ENCODE measurements at regions of chr7 and their contacts with region 1.

Region 1: DNA sequence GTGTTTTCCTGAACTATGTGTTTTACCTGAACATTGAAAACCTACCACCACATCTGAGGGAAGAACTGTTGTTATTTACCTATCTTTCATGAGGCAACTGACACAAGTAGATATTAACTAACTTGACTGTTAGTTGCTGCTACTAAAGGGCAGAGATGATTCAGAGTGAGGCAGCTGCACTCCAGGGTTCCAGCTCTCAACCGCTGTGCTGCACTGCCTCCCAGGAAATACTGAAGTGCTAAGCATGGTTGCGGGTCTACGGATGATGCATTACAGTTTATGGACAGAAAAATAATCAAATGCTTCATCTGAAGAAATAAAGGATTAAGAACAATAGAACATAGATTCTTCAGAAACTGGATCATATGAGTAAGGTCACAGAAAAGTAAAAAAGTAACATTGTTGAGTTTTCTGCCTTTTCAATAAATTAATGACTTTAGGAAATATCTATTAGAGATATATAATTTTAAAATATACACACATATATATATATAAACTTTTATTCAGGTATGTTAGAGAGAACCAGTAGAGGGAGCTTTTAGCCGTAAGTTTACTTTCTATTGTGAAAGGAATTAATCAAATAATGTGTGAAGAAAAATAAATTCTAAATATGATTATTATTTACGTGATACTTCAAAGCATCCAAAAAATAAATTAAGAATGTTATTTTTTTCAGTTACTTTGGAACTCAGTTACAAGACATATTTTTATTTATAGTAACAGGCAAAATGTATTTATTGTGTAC is 620.0 kb downstream of the CNTNAP2 start:
- DNase-seq: peak; percentile 39
- ATAC-seq: peak; percentile 89
- H3K4me3 ChIP-seq: no peak overlapping the region
- H3K27ac ChIP-seq: peak overlapping the region; percentile 66
- H3K4me1 ChIP-seq: no peaks in the 10 kb centered on the region; the same call in 1 of the 2 replicates
- H3K27me3 ChIP-seq: no peaks in the 10 kb centered on the region
- CTCF ChIP-seq: 0 out of 2 replicates have a peak, but pooled peaks have one; percentile 21

Region 2: GRCh38 chr7:146115851-146116520 is 620.6 kb before region 1 on chr7:
- CTCF ChIA-PET with region 1: no interaction called
- POLR2A ChIA-PET with region 1: no interaction called
- intact Hi-C with region 1: loop called (anchors 2 kb)
- DNase-seq: peak; percentile 46
- ATAC-seq: peak; percentile 70
- H3K4me3 ChIP-seq: peak overlapping the region; percentile 66
- H3K27ac ChIP-seq: no peak overlapping the region
- H3K4me1 ChIP-seq: no peaks in the 10 kb centered on the region
- H3K27me3 ChIP-seq: peaks cover 19% of the 10 kb centered on the region
- CTCF ChIP-seq: no peak

Region 3: GRCh38 chr7:147033641-147034040 is 297.0 kb after region 1 on chr7:
- CTCF ChIA-PET with region 1: no interaction called
- POLR2A ChIA-PET with region 1: no interaction called
- intact Hi-C with region 1: loop called (anchors 10 kb)
- DNase-seq: no peak
- ATAC-seq: no peak
- H3K4me3 ChIP-seq: no peak overlapping the region
- H3K27ac ChIP-seq: no peak overlapping the region
- H3K4me1 ChIP-seq: no peaks in the 10 kb centered on the region
- H3K27me3 ChIP-seq: no peaks in the 10 kb centered on the region
- CTCF ChIP-seq: no peak

Region 4: DNA sequence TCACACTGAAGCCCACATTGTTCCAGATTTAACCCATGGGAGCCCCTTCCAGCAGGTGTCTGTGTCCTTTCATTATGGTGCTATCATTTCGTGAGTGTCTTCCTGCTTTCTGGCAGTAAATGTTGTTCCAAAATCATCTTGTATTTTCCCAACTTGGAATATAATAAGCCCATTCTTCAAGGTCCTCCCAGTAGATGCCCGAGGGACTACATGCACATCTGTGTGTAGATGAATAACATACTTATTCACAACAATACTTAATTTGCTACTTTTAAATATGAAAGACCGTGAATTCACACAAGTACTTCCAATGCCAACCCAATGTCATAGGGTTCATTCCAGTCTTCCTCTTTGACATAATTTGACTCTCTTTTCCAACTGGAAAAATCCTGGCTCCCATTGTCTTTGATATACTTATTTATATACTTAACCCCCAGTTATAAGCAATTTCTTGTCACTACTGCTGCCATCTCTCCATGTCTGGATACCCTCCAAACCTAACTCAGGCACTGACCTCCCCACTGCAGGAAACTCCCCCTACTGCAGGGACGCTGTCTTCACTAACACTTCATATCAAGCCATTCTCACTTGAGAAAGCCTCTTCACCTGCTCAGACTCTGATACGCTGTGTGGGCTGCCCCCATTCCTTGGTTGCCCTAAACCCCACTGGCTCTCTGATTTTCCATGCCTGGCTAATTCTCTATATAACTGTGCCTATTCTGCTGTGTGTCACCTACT is 499.2 kb after region 1 on chr7:
- CTCF ChIA-PET with region 1: no interaction called
- POLR2A ChIA-PET with region 1: no interaction called
- intact Hi-C with region 1: loop called (anchors 5 kb)
- DNase-seq: no peak
- ATAC-seq: no peak
- H3K4me3 ChIP-seq: no peak overlapping the region
- H3K27ac ChIP-seq: no peak overlapping the region
- H3K4me1 ChIP-seq: no peaks in the 10 kb centered on the region
- H3K27me3 ChIP-seq: no peaks in the 10 kb centered on the region
- CTCF ChIP-seq: no peak

Region 5: GRCh38 chr7:147492606-147493005 is 756.0 kb after region 1 on chr7:
- CTCF ChIA-PET with region 1: no interaction called
- POLR2A ChIA-PET with region 1: no interaction called
- intact Hi-C with region 1: loop called (anchors 10 kb)
- DNase-seq: peak; percentile 88
- ATAC-seq: peak; percentile 98
- H3K4me3 ChIP-seq: no peak overlapping the region
- H3K27ac ChIP-seq: peak overlapping the region; percentile 70
- H3K4me1 ChIP-seq: peaks cover 19% of the 10 kb centered on the region
- H3K27me3 ChIP-seq: no peaks in the 10 kb centered on the region
- CTCF ChIP-seq: no peak

Region 6: DNA sequence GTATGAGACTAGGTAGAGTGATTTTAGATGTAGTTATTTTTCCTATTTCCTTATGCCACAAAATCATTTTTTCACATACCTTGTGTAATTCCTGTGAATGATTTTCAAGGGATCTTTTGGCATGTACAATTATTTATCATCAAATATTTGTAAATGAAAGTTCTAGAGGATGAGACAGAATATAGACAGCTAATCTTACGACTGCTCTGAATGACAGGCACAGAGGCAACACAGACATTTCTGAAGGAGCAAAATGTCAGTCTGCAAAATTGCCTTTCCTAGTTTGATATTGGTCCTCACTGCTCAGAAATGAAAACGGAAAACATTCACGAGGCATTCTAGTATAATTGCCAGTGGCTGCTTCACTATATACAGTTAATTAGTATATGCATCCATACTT is 1043.3 kb after region 1 on chr7:
- CTCF ChIA-PET with region 1: no interaction called
- POLR2A ChIA-PET with region 1: no interaction called
- intact Hi-C with region 1: loop called (anchors 10 kb)
- DNase-seq: no peak
- ATAC-seq: no peak
- H3K4me3 ChIP-seq: no peak overlapping the region
- H3K27ac ChIP-seq: no peak overlapping the region
- H3K4me1 ChIP-seq: no peaks in the 10 kb centered on the region
- H3K27me3 ChIP-seq: no peaks in the 10 kb centered on the region
- CTCF ChIP-seq: no peak